Naive thymus-derived CD4-positive, alpha-beta T cell (primary cell): ENCODE measurements at regions of chr6 and their contacts with region 1.

Region 1: DNA sequence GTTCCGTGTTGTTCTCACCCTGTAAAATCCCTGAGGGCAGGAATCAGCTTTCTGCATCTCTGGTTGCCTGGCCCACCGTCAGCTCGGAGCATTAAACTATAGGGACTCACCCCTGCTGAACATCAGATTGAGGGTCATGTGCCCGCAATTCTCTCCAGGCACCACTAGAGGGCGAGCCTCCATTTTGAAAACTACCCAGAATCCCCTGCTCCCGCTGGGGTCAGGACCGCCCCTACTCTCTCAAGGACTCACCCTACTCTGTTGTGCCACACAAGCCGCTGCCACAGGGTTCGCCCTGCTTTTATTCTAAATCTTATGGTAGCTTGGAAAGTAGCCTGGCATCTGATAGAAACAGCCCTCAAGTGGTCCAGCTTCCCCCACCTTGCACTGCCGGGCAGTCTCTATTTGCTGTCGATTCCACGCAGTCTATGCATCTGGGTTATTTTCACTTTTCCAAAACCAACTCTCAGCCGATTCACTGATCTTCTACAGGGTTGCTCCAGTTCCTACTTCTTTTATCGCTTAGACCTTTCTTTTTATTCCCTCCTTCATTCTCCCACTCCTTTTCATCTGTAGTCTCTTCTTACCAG is 244.1 kb upstream of the QKI start:
- DNase-seq: peak in 5 of 9 donors; percentile 3 to 15 (median 8)
- ATAC-seq: peak; percentile 51
- H3K4me3 ChIP-seq: no peak overlapping the region
- H3K4me3 Mint-ChIP-seq: no peak overlapping the region
- H3K27ac ChIP-seq: no peak overlapping the region
- H3K27ac Mint-ChIP-seq: peak overlapping the region in 1 of 9 donors; percentile 21
- H3K4me1 ChIP-seq: no peaks in the 10 kb centered on the region
- H3K4me1 Mint-ChIP-seq: peaks cover 0 to 3% (median 0%) of the 10 kb centered on the region in 7 donors
- H3K27me3 ChIP-seq: no peaks in the 10 kb centered on the region
- H3K27me3 Mint-ChIP-seq: peaks cover 0 to 3% (median 0%) of the 10 kb centered on the region in 5 donors

Region 2: DNA sequence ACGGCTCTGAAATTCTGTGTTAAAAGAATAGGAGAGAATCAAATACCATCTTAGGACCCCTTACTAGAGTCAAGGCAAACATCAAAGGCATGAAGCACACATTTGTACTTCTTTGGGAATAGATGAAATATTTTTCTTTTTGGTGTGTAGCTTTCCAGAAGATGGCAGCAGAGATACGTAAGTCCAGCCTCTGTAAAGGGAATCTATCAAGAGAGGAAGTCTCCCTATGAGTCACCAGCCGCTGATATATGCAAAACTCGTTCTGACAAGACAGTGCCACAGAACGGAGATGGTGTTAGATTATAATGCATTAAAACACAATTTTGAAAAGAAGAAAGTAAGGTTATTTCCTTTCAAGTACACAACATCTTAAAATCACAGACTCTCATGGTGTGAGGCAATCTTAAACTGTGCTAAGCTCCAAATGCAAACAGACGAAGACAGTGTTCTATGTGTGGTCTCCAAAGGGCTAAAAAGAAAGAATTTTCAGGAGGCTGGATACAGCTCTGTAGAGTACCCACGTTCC is 1776.5 kb before region 1 on chr6:
- CTCF ChIA-PET with region 1: no interaction called
- POLR2A ChIA-PET with region 1: no interaction called
- intact Hi-C with region 1: loop called (anchors 5 to 10 kb)
- DNase-seq: peak in 8 of 9 donors; percentile 18 to 46 (median 30)
- ATAC-seq: peak; percentile 96
- H3K4me3 ChIP-seq: no peak overlapping the region
- H3K4me3 Mint-ChIP-seq: no peak overlapping the region
- H3K27ac ChIP-seq: no peak overlapping the region
- H3K27ac Mint-ChIP-seq: no peak overlapping the region
- H3K4me1 ChIP-seq: peaks cover 6% of the 10 kb centered on the region in 2 donors
- H3K4me1 Mint-ChIP-seq: no peaks in the 10 kb centered on the region
- H3K27me3 ChIP-seq: no peaks in the 10 kb centered on the region
- H3K27me3 Mint-ChIP-seq: peaks cover 0 to 19% (median 0%) of the 10 kb centered on the region in 5 donors

Region 3: DNA sequence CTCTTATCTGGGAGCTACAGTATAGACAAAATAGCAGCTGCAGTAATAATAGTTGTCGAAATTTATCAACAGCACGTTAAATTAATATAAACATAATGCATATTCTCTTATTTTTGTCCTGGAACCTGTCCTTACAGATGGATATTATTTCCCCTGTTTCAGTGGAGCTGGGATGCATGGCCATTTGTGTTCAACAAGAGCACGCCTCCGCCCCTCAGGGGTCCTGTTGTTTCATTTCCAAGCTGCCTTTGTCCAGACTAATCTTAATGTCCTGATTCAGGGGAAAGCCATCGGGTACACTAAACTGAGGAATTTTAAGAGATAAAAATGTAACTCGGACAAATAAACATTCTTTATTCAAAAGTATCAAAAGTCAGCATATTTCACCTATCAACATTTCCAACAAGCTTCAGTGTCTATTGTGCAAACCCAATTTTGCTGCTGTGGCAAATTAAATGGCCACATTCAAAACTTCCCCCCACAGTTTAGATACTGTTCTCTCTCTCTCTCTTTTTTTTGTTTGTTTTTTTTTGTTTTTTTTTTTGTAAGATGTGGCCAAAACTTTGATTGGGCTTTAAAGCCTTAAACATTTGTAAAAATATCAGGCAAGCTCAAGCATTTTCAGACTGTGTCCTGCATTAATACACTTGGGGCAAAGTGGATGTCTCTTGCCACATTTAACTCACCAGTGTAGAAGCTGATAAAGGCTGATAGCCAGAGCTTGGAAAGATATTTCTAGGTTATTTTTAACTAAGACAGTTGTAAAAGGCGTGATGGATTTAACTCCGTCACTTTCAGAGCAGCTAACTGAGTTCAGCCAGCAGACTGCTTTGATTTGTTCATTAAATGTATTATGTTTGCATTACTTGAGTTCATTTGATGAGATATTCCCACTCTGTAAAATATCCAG is 131.6 kb after region 1 on chr6:
- CTCF ChIA-PET with region 1: no interaction called
- POLR2A ChIA-PET with region 1: no interaction called
- intact Hi-C with region 1: no loop called
- DNase-seq: no peak
- ATAC-seq: no peak
- H3K4me3 ChIP-seq: no peak overlapping the region
- H3K4me3 Mint-ChIP-seq: no peak overlapping the region
- H3K27ac ChIP-seq: no peak overlapping the region
- H3K27ac Mint-ChIP-seq: no peak overlapping the region
- H3K4me1 ChIP-seq: no peaks in the 10 kb centered on the region
- H3K4me1 Mint-ChIP-seq: no peaks in the 10 kb centered on the region
- H3K27me3 ChIP-seq: no peaks in the 10 kb centered on the region
- H3K27me3 Mint-ChIP-seq: peaks cover 0 to 12% (median 2%) of the 10 kb centered on the region in 5 donors

Region 4: DNA sequence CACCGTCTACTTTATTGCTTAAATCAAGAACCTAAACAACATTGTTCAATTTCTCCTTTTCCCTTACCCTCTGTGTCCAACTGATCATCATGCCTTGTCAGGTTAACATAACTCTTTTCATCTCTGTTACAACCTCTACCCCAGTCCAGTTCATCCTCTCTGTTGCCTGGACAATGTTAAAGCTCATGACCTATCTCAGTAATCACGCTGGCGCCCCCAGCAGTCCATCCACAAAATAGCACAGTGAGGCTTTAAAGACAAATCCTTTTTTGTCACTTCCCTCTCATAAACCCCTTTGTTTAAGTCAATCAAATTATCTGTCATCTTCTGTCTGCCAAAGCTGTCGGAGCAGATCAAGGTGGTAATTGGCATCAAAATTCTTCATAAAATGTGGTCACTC is 384.3 kb after region 1 on chr6:
- CTCF ChIA-PET with region 1: interaction called, 4 read pairs
- POLR2A ChIA-PET with region 1: no interaction called
- intact Hi-C with region 1: loop called (anchors 1 to 5 kb)
- DNase-seq: peak; percentile 17 to 49 (median 42)
- ATAC-seq: peak; percentile 75
- H3K4me3 ChIP-seq: no peak overlapping the region
- H3K4me3 Mint-ChIP-seq: no peak overlapping the region
- H3K27ac ChIP-seq: no peak overlapping the region
- H3K27ac Mint-ChIP-seq: peak overlapping the region in 4 of 9 donors; percentile 3 to 49 (median 10)
- H3K4me1 ChIP-seq: no peaks in the 10 kb centered on the region
- H3K4me1 Mint-ChIP-seq: peaks cover 4 to 20% (median 7%) of the 10 kb centered on the region in 7 donors
- H3K27me3 ChIP-seq: peaks cover 0 to 3% of the 10 kb centered on the region in 2 donors
- H3K27me3 Mint-ChIP-seq: no peaks in the 10 kb centered on the region

Region 5: GRCh38 chr6:163651915-163652668 is 481.7 kb after region 1 on chr6:
- CTCF ChIA-PET with region 1: no interaction called
- POLR2A ChIA-PET with region 1: no interaction called
- intact Hi-C with region 1: no loop called
- DNase-seq: no peak
- ATAC-seq: no peak
- H3K4me3 ChIP-seq: no peak overlapping the region
- H3K4me3 Mint-ChIP-seq: no peak overlapping the region
- H3K27ac ChIP-seq: no peak overlapping the region
- H3K27ac Mint-ChIP-seq: no peak overlapping the region
- H3K4me1 ChIP-seq: no peaks in the 10 kb centered on the region
- H3K4me1 Mint-ChIP-seq: peaks cover 0 to 2% (median 0%) of the 10 kb centered on the region in 7 donors
- H3K27me3 ChIP-seq: no peaks in the 10 kb centered on the region
- H3K27me3 Mint-ChIP-seq: peaks cover 0 to 18% (median 6%) of the 10 kb centered on the region in 5 donors

Region 6: GRCh38 chr6:163956571-163957407 is 786.4 kb after region 1 on chr6:
- CTCF ChIA-PET with region 1: interaction called, 3 read pairs
- POLR2A ChIA-PET with region 1: no interaction called
- intact Hi-C with region 1: loop called in 1 of 2 experiments (anchors 1 kb)
- DNase-seq: peak; percentile 5 to 50 (median 29)
- ATAC-seq: peak; percentile 78
- H3K4me3 ChIP-seq: no peak overlapping the region
- H3K4me3 Mint-ChIP-seq: no peak overlapping the region
- H3K27ac ChIP-seq: no peak overlapping the region
- H3K27ac Mint-ChIP-seq: no peak overlapping the region
- H3K4me1 ChIP-seq: no peaks in the 10 kb centered on the region
- H3K4me1 Mint-ChIP-seq: peaks cover 0 to 4% (median 0%) of the 10 kb centered on the region in 7 donors
- H3K27me3 ChIP-seq: no peaks in the 10 kb centered on the region
- H3K27me3 Mint-ChIP-seq: peaks cover 18 to 42% (median 27%) of the 10 kb centered on the region in 5 donors

Region 7: DNA sequence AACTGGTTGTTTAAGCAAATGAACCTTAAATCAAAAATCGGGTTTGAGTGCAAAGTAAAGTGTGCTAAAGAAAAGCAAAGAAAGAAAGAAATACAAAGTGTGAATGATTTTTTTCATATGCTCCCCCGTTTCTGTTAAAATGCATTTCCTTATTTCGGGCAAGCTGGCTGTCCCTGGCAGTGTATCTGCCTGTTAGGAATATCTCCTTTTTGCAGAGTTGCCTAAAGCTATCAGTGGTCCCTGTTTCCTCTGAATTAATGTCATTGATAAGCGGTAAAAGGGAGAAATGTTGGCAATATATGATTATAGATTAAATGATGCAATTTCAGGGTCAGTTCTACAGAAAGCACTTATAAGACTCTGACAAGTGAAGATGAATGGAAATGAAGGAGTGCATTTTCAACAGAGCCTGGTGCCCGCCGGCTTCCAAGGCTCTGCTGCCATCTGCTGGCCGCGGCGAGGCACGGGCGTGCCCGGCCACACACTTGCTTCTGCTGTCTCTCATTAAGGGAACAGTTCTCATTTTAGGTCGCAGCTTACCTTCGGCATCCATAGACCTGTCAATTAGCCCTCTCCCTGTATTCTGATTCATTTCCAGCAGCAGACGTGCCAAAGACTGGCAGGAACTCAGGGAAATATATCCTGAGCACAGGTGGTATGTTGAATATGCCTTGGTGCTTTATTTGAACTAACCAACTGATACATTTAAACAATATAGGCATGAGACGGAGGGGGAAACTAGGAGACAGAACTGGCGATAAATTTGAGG is 1757.1 kb after region 1 on chr6:
- CTCF ChIA-PET with region 1: no interaction called
- POLR2A ChIA-PET with region 1: no interaction called
- intact Hi-C with region 1: loop called (anchors 1 to 10 kb)
- DNase-seq: peak in 7 of 9 donors; percentile 33 to 49 (median 41)
- ATAC-seq: peak; percentile 53
- H3K4me3 ChIP-seq: no peak overlapping the region
- H3K4me3 Mint-ChIP-seq: no peak overlapping the region
- H3K27ac ChIP-seq: no peak overlapping the region
- H3K27ac Mint-ChIP-seq: no peak overlapping the region
- H3K4me1 ChIP-seq: no peaks in the 10 kb centered on the region
- H3K4me1 Mint-ChIP-seq: no peaks in the 10 kb centered on the region
- H3K27me3 ChIP-seq: no peaks in the 10 kb centered on the region
- H3K27me3 Mint-ChIP-seq: no peaks in the 10 kb centered on the region